ENCODE measurements at regions of chr10 and their contacts with region 1.

Region 1: GRCh38 chr10:28367929-28368484 is 65.1 kb upstream of the MPP7 start:
- DNase-seq: peak; percentile 74 to 86 (median 80)
- H3K4me3 ChIP-seq: no peak overlapping the region
- H3K4me3 Mint-ChIP-seq: peak overlapping the region; percentile 41 to 87 (median 80)
- H3K27ac ChIP-seq: peak overlapping the region; percentile 65
- H3K27ac Mint-ChIP-seq: peak overlapping the region; percentile 85 to 98 (median 97)
- H3K4me1 ChIP-seq: peaks cover 58% of the 10 kb centered on the region
- H3K4me1 Mint-ChIP-seq: peaks cover 33 to 61% (median 49%) of the 10 kb centered on the region in 4 donors
- H3K27me3 ChIP-seq: no peaks in the 10 kb centered on the region
- H3K27me3 Mint-ChIP-seq: no peaks in the 10 kb centered on the region

Region 2: GRCh38 chr10:28355376-28355775 is 12.6 kb before region 1 on chr10:
- CTCF ChIA-PET with region 1: interaction called, 10 read pairs
- POLR2A ChIA-PET with region 1: interaction called, 8 read pairs
- intact Hi-C with region 1: no loop called
- DNase-seq: no peak
- H3K4me3 ChIP-seq: no peak overlapping the region
- H3K4me3 Mint-ChIP-seq: no peak overlapping the region
- H3K27ac ChIP-seq: no peak overlapping the region
- H3K27ac Mint-ChIP-seq: peak overlapping the region in 1 of 7 donors; percentile 38
- H3K4me1 ChIP-seq: no peaks in the 10 kb centered on the region
- H3K4me1 Mint-ChIP-seq: peaks cover 0 to 6% (median 2%) of the 10 kb centered on the region in 4 donors
- H3K27me3 ChIP-seq: no peaks in the 10 kb centered on the region
- H3K27me3 Mint-ChIP-seq: no peaks in the 10 kb centered on the region

Measured in CD4-positive, alpha-beta memory T cell (primary cell).